Cardiac septum (tissue), 1 donor: ENCODE measurements at regions of chr22 and their contacts with region 1.

Region 1: GRCh38 chr22:36028646-36029405 is at the start of gene RBFOX2:
- DNase-seq: peak; percentile 96
- total RNA-seq, gene RBFOX2: 102 TPM

Region 2: DNA sequence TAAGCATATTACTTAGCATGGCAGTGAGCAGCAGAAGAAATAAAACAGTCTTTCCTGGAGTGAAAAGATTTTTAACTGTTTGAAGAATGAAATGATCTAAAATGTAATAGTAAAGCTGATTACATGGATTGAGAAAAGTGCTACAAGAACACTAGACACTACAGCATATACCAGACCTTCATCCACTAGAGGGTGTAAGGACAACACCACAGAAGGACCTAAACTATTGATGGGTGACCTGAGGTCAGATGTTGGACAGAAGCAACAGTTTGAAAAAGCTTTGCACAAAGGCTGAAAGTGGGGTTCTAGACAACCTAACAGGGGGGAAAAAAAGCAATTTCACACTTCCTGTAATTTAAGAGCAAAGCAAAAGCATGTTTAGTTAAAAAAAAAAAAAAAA is 97.9 kb before region 1 on chr22:
- intact Hi-C with region 1: loop called (anchors 10 kb)
- DNase-seq: no peak

Region 3: GRCh38 chr22:35971456-35972119 is 57.2 kb before region 1 on chr22:
- intact Hi-C with region 1: loop called (anchors 5 kb)
- DNase-seq: no peak